ENCODE measurements at regions of chr12 and their contacts with region 1.

Region 1: GRCh38 chr12:5648692-5649359 is 216.9 kb downstream of the NTF3 start:
- DNase-seq: peak; percentile 43 to 52
- H3K4me3 ChIP-seq: no peak overlapping the region
- H3K27ac ChIP-seq: no peak overlapping the region
- H3K4me1 ChIP-seq: no peaks in the 10 kb centered on the region; a peak in 1 of 7 replicates
- H3K27me3 ChIP-seq: no peaks in the 10 kb centered on the region
- CTCF ChIP-seq: peak in 2 of 3 experiments; percentile 71 to 76; a peak in 3 of 4 replicates
- EP300 ChIP-seq: no peak
- POLR2A ChIP-seq: no peak
- RAD21 ChIP-seq: peak; percentile 81 to 85

Region 2: DNA sequence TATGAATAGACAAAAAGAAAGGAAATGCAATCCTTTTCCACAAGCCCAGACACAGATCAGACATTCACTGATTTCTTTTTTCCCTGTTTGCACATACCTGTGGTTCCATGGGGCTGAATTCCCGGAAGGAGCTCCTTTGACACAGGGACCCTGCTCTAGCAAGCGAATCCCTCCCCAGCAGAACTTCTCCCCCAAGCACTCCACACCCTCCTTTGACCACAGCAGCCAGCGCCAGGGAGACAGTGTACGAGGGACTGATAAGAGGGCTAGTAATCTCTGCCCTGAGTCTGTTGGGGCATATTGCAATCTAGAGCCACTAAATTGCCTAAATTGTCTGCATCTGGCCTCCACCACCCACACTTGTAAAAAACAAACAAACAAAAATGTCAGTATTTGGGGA is 300.3 kb before region 1 on chr12:
- CTCF ChIA-PET with region 1: no interaction called
- POLR2A ChIA-PET with region 1: no interaction called
- DNase-seq: no peak
- H3K4me3 ChIP-seq: no peak overlapping the region
- H3K27ac ChIP-seq: no peak overlapping the region
- H3K4me1 ChIP-seq: no peaks in the 10 kb centered on the region; a peak in 1 of 7 replicates
- H3K27me3 ChIP-seq: no peaks in the 10 kb centered on the region
- CTCF ChIP-seq: no peak
- EP300 ChIP-seq: no peak
- POLR2A ChIP-seq: no peak
- RAD21 ChIP-seq: no peak

Region 3: DNA sequence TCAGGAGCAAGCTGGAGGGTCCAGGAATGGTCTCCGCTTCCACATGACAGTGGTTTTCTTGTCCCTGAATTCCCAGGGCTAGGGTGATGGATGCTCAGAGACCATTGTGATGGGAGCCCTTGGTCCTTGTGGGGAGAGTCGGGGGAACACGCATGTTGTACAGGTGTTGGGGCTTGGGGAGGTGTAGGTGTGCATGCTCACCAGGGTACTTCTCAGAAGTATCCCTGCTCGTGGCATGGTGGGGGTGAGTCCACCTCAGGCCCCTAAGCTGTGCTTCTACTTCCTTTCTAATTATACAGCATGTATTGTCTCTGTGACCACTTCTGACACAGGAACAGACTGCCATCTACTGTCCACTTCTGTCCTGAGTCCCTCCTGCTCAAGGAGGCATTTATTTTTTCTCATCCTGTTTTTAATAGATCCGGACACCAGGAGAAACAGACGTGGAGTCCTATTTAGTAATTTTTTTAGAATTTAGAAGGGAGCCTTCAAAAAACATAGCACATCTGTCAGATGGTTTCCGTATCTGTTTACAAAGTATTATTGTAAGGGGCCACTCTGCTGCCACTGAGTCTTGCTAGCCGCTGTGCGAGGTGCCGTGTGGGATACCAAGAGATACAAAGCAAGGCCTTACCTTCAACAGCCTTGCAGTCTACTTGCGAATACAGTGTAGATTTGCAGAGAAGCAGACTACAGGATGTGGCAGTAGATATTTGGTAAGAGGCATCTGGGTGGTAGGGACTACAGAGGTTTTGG is 206.4 kb before region 1 on chr12:
- CTCF ChIA-PET with region 1: interaction called, 16 read pairs
- POLR2A ChIA-PET with region 1: no interaction called
- DNase-seq: no peak
- H3K4me3 ChIP-seq: no peak overlapping the region
- H3K27ac ChIP-seq: no peak overlapping the region
- H3K4me1 ChIP-seq: peaks cover 2 to 8% (median 3%) of the 10 kb centered on the region in 4 experiments; a peak in 4 of 7 replicates
- H3K27me3 ChIP-seq: no peaks in the 10 kb centered on the region; a peak in 1 of 7 replicates
- CTCF ChIP-seq: peak; percentile 7 to 73 (median 61)
- EP300 ChIP-seq: no peak
- POLR2A ChIP-seq: no peak
- RAD21 ChIP-seq: peak; percentile 80 to 87

Region 4: DNA sequence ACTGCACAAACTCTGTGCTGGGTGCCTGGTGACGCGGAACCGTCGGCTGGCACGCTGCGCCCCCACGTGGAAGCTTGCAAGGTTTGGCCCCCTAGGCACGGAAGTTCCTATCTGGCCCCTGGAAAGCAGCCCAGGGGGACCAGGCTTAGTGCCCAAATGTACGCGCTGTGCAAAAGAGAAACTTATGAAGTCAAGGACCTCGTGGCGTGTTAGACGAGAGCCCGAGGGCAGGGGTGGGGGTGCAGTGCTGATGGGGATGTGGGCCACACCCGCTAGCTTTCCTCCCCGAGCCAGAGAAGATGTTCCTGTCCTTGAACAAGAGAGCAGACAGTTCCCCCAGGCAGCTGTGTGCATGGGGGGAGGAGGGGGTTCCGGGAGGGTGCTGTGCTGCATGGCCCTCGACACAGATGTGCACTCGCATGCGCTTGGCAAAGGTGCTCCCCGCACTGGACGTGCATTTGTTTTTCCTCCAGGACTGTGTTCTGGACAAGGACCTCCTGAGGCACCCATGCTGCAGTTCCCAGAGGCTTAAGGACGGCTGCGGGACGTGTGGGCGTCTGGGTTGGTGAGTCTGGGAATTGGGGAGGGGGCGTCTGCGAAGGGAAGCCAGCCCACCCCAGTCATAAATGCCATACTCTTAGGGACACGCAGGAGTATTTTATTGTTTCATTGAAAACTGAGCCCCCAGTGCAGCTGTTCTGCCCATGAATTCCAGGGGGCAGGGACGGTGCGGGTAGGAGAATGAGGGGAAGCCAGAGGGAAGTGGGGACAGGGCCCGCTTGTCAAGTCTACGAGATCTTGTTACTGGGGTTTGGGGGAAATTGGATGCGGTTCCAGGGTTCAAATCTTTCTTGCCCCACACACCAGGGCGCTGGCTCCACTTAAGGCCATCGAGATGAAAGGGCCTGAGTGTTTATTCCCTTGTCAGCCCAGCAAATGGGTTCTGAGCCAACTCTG is 136.9 kb before region 1 on chr12:
- CTCF ChIA-PET with region 1: interaction called, 18 read pairs
- POLR2A ChIA-PET with region 1: no interaction called
- DNase-seq: peak in 1 of 2 experiments; percentile 77
- H3K4me3 ChIP-seq: no peak overlapping the region
- H3K27ac ChIP-seq: no peak overlapping the region
- H3K4me1 ChIP-seq: peaks cover 0 to 7% (median 3%) of the 10 kb centered on the region in 4 experiments; a peak in 4 of 7 replicates
- H3K27me3 ChIP-seq: no peaks in the 10 kb centered on the region
- CTCF ChIP-seq: peak; percentile 73 to 82 (median 76)
- EP300 ChIP-seq: no peak
- POLR2A ChIP-seq: no peak
- RAD21 ChIP-seq: peak; percentile 66 to 83

Region 5: DNA sequence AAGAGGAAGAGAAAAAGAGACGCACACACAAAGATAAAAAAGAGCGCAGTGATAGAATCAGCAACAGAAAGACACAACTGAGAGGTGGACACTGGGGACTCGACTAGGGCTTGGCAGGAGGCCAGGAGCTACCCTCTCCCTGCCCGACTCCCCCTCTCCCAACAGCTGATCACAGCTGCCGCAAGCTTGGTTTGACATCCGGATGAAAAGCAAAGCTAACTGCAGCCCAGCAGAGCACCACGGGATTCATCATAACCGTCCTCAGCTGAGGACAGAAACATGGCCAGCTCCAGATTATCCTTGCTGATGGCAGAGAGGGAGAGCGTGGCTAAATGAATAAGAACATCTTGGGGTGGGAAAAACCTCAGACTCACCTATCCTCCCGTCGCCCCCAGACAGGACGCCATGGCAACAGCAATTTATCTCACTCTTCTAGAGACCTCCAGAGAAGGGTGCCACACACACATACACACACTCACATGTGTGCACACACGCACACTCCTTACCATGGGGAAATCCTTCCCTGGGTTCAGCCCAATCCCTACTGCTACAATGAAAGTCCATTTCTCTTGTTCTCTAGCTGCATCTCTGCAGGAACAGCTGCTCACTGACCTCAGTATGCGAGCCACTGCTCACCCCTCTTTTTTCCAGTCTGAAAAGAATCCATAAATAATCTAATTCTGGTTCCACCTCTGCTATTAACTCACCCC is 81.7 kb before region 1 on chr12:
- CTCF ChIA-PET with region 1: interaction called, 32 read pairs
- POLR2A ChIA-PET with region 1: no interaction called
- DNase-seq: no peak
- H3K4me3 ChIP-seq: no peak overlapping the region
- H3K27ac ChIP-seq: no peak overlapping the region
- H3K4me1 ChIP-seq: no peaks in the 10 kb centered on the region
- H3K27me3 ChIP-seq: no peaks in the 10 kb centered on the region
- CTCF ChIP-seq: no peak
- EP300 ChIP-seq: no peak
- POLR2A ChIP-seq: no peak
- RAD21 ChIP-seq: no peak

Region 6: DNA sequence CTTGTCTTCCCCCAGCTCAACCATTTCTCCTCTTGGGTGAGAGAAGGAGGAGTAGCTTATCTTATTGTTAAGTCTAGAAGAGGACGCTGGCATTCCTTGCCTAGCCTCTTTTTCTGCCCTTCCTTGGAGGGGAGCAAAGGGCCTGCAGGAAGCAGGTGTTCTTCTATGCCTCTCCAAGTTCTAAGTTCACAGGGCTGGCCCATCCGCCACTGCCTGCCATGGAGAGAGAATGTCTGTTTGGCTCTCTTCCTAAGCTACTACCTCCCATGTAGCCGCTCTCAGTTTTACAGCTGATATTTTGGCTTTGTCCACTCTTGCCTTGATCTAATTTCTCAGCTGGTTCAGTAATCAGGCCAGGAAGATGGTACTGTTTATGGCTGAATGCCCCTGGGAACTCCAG is 15.7 kb before region 1 on chr12:
- CTCF ChIA-PET with region 1: interaction called, 32 read pairs
- POLR2A ChIA-PET with region 1: no interaction called
- DNase-seq: no peak
- H3K4me3 ChIP-seq: no peak overlapping the region
- H3K27ac ChIP-seq: no peak overlapping the region
- H3K4me1 ChIP-seq: no peaks in the 10 kb centered on the region; a peak in 2 of 7 replicates
- H3K27me3 ChIP-seq: no peaks in the 10 kb centered on the region; a peak in 1 of 7 replicates
- CTCF ChIP-seq: no peak
- EP300 ChIP-seq: no peak
- POLR2A ChIP-seq: no peak
- RAD21 ChIP-seq: no peak

Region 7: DNA sequence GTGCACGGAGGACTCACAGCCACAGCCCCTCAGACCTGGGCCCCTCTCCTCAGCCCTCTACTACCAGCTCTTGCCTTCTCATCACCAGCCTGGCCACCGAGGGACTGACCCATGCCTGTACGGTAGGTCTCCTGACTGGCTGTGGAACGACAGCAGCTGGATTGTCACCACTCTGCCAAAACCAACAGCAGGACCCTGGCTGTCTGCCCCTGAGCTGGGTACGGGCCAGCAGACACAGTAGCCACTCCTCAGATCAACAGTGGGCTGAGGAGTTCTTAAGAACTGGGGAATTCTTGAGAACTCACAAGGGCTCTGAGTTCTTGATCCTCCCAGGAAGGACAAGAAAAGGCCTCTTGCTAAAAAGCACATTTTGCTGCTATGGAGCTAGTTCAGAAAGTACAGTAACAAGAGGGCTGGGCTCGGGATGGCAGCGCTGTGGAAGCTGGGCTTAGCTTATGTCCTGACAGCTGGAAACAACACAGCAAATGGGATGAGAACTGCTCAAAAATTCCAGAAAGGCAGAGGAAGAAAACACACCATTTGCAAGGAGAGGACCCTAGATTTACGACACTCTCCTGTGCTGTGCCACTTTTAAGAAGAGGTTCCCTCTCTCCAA is 119.9 kb after region 1 on chr12:
- CTCF ChIA-PET with region 1: no interaction called
- POLR2A ChIA-PET with region 1: no interaction called
- DNase-seq: no peak
- H3K4me3 ChIP-seq: no peak overlapping the region
- H3K27ac ChIP-seq: no peak overlapping the region
- H3K4me1 ChIP-seq: no peaks in the 10 kb centered on the region
- H3K27me3 ChIP-seq: no peaks in the 10 kb centered on the region
- CTCF ChIP-seq: no peak
- EP300 ChIP-seq: no peak
- POLR2A ChIP-seq: no peak
- RAD21 ChIP-seq: no peak

Region 8: DNA sequence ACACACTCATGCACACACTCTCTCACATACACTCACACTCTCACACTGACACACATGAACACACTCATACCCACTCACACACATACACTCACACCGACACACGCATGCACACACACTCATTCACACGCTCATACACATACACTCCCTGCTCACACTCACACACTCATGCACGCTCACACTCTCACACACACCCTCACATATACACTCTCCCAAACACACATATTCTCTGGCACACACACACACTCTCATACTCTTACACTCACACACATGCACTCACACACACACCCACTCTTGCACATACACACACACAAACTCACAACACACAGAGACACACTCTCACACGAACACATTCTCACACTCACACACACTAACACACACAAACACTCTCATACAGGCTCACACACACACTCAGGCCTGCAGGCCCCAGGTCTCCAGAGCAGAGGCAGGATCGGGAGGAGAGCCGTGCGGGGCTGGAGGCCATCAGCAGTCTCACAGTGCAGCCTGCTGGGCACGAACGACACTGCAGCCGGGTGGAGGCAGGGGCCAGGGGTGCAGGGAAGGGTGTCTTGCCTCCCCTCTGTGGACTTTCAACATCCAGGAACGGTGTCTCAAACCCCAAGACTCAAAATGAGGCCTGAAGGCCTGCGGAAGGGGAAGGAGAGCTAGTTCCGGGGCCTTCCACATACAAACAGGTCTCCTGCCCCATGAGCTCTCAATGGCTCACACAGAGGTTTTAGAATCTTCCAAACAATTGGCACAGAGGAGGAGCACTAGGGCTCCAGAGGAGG is 147.5 kb after region 1 on chr12:
- CTCF ChIA-PET with region 1: interaction called, 18 read pairs
- POLR2A ChIA-PET with region 1: no interaction called
- DNase-seq: peak in 1 of 2 experiments; percentile 87
- H3K4me3 ChIP-seq: no peak overlapping the region
- H3K27ac ChIP-seq: no peak overlapping the region
- H3K4me1 ChIP-seq: no peaks in the 10 kb centered on the region
- H3K27me3 ChIP-seq: 0 out of 7 replicates have a peak, but pooled peaks cover 0 to 3% (median 0%) of the 10 kb centered on the region in 4 experiments
- CTCF ChIP-seq: peak; percentile 95 to 100 (median 97)
- EP300 ChIP-seq: no peak
- POLR2A ChIP-seq: no peak
- RAD21 ChIP-seq: peak; percentile 98